ENCODE measurements at regions of chr6 and their contacts with region 1.

Region 1: DNA sequence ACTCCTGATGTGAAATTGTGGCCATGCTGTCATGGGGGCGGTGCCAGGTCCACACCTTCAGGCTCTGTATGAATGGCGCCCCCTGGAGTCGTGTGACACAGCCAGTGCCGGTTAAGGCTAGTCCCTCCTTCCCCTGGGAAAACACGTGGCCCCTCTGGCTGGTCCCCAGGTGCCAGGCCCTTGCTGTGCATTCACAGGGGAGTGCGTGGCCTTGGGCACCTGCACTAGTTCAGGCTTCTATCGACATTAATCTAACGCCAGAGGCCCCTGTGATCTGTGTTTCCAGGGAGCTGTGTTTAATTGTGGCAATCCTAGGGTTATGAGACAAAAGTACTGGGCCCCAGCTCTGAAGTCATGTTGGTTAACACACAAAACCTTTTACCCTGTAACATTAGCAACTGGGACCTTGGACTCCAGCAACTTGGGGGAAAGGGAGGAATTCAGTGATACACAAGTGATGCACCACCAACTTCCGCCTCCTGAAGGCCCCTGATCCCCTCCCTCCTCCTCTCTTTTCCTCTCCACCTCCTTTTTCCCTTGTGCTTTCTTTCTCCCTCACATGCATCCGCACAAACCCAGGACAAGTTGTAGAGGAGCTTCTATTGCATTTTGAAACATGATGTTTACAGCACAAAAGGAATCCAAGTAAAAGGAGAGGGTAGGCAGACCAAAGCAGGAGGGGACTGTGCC is 74.0 kb downstream of the SSR1 start:
- DNase-seq: no peak
- H3K4me3 ChIP-seq: no peak overlapping the region
- H3K27ac ChIP-seq: no peak overlapping the region
- H3K4me1 ChIP-seq: peaks cover 27% of the 10 kb centered on the region
- H3K27me3 ChIP-seq: no peaks in the 10 kb centered on the region
- CTCF ChIP-seq: peak in 2 of 3 experiments; percentile 35 to 61
- POLR2A ChIP-seq: no peak

Region 2: DNA sequence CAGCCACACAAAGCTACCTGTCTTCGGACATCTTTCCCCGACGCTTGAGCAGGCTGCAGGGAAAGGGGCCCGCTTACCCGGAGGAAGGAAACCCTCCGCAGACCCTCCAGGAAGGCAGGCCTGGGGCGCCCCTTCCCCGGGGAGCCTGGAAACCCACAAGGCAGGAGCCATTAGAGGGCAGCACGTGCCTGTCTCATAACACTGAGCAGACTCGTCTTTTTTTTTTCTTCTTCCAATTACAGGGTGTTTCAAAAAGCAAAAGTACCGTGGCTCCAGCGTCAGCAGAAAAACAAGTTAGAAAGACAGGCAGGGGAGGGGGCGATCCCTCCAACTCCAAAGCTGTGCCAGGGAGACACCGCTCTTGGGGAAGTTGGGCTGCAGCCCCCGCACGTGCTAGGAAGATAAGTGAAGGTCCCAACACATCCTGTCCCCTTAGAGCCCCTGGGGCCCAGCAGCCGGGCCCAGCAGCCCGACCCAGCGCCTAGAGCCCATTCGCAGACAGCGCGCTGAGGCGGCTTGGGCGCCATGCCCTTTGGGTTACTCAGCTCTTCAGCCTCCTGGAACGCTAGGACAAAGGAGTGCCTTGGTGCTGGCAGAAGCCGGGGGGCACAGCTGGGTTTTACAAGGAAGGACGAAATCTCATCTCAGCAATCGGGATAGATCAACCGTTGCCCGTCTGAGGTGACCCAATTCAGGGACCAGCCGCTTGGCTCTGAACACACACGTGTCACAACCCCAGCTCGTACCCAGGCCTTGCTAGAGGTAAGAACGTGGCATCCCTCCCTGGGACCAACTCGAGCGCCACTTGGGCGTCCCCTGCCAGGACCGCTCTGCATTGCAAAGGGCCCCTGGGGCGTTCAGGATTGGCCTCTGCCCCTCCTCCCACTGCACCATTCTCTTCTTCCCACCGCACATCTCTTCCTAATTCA is 514.2 kb before region 1 on chr6:
- intact Hi-C with region 1: loop called (anchors 10 kb)
- DNase-seq: no peak
- H3K4me3 ChIP-seq: peak overlapping the region; percentile 38 to 50
- H3K27ac ChIP-seq: peak overlapping the region; percentile 82
- H3K4me1 ChIP-seq: peaks cover 19% of the 10 kb centered on the region
- H3K27me3 ChIP-seq: no peaks in the 10 kb centered on the region
- CTCF ChIP-seq: peak; percentile 26 to 57 (median 53)
- POLR2A ChIP-seq: no peak

Region 3: DNA sequence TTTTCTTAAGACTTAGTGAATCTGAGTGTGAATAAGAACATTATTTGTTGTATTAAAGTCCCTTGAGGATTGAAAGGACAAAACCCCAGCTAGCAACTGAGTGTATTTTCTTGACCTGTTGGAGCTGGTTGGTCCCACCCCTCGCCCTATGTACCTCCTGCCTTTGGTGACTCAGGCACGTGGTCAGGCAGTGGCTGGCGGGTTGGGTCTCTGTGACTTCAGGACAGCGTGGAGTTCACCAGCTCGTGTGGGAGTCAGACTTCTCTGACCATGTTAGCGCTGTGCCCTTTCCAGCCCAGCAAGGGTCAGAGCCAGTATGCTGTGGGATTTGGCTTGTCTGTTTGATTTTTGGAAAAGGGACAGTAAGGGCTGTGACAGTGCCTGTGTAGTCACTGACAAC is 19.7 kb before region 1 on chr6:
- intact Hi-C with region 1: no loop called
- DNase-seq: no peak
- H3K4me3 ChIP-seq: no peak overlapping the region
- H3K27ac ChIP-seq: peak overlapping the region; percentile 9
- H3K4me1 ChIP-seq: peaks cover 44% of the 10 kb centered on the region
- H3K27me3 ChIP-seq: no peaks in the 10 kb centered on the region
- CTCF ChIP-seq: no peak
- POLR2A ChIP-seq: no peak